Posterior vena cava (tissue), 2 donors: ENCODE measurements at regions of chrX and their contacts with region 1.

Region 1: DNA sequence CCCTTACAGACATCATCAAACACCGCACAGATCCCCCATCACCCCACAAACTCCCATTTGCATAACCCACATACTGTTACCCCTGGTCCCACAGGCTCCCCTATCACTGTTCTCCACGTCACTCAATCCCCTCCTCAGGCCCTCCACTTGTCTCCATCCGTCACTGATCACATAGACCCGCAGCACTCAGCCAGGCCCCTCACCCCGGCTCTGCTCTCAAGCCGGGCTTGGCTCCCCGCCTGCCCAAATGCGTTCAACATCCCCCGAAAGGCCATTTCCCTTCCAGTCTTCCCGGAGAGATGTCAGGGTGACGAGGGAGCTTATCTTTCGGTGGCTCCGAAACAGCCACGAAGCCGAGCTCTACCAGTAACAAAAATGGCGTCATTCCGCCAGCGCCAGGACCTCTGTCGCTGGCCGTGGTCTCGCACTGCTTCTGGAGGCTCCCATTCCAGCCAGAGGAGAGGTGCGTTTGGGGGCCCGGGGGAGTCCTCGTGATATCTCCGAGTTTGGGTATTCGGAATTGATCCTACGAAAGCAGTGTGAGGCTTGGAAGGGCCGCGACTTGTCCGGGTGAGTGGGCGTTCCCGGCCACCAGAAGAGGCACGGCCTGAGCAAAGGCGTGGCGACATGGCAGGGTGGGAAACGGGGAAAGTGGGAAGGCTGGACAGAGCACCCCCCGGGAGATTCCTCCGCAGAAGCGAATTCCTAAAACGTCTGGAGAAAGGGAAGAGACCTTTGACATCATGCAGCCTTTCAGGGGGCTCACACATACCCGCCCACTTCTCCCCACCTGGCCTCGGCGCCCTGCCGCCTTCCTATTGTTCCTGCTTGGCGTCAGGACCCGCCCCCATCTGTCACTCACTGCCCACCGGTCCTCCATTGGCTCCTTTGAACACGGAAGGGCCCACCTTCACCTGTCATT is at the start of gene ZNF630:
- DNase-seq: peak; percentile 88
- total RNA-seq, gene ZNF630: 3.4 to 4.4 TPM

Region 2: DNA sequence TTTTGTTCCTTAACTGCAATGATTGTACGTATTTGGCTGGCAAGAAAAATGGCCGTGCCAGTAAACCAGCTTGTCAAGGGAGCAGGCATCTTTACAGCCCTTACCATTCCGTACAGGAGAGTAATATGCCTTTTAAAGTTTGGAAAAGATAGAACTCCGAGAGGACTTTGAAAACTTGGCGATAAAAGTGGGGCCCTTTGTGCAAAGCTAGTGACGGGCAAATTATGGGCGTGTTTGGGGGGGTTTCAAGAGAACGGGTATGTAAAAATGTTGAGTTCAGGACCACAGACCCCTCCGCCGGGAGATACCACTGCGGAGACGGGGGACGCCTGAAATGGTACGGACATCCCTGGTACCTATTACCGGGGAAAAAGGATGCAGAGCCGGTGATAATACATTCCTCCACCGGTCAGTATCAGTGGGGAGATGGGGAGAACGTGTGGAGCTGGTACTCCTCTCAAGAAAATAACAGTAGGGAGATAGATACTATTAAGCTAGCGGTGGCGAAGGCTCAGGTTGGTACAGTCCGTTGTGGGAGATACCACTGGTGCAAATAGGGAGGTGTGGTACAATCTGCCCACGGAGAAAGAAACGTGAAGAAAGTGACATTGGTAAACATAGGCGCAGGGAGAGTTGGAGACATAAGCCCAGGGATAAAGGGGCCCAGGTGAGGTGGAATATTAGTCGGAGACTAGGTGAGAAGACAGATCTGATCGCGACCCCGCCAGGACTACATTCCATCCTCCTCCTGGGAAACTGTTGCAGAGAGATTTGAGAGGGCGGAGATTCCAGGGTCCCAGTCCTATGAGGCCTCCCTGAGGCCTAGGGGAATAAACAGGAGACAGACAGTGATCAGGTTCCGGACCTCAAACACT is 50.1 kb before region 1 on chrX:
- intact Hi-C with region 1: no loop called
- DNase-seq: peak; percentile 93

Region 3: GRCh38 chrX:48045410-48046331 is 25.7 kb before region 1 on chrX:
- intact Hi-C with region 1: no loop called
- DNase-seq: no peak

Region 4: GRCh38 chrX:48468693-48469691 is 397.7 kb after region 1 on chrX:
- intact Hi-C with region 1: loop called in 1 of 2 experiments (anchors 10 kb)
- DNase-seq: no peak